ENCODE measurements at regions of chr17 and their contacts with region 1.

Region 1: DNA sequence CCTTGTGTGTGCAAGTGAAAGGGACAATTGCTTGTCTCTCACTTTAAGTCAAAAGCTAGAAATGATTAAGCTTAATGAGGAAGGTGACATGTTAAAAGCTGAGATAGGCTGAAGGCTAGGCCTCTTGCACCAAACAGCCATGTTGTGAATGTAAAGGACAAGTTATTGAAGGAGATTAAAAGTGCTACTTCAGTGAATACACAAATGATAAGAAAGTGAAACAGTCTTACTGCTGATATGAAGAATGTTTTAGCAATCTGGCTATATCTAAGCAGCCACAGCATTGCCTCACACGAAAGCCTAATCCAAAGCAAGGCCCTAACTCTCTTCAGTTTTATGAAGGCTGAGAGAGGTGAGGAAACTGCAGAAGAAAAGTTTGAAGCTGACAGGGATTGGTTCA is 71.0 kb downstream of the CDRT15 start:
- DNase-seq: no peak
- ATAC-seq: no peak
- H3K4me3 ChIP-seq: no peak overlapping the region
- H3K4me3 Mint-ChIP-seq: no peak overlapping the region
- H3K27ac ChIP-seq: no peak overlapping the region
- H3K27ac Mint-ChIP-seq: peak overlapping the region in 4 of 9 donors; percentile 6 to 47 (median 28)
- H3K4me1 ChIP-seq: no peaks in the 10 kb centered on the region
- H3K4me1 Mint-ChIP-seq: peaks cover 2 to 23% (median 15%) of the 10 kb centered on the region in 7 donors
- H3K27me3 ChIP-seq: no peaks in the 10 kb centered on the region
- H3K27me3 Mint-ChIP-seq: no peaks in the 10 kb centered on the region

Region 2: DNA sequence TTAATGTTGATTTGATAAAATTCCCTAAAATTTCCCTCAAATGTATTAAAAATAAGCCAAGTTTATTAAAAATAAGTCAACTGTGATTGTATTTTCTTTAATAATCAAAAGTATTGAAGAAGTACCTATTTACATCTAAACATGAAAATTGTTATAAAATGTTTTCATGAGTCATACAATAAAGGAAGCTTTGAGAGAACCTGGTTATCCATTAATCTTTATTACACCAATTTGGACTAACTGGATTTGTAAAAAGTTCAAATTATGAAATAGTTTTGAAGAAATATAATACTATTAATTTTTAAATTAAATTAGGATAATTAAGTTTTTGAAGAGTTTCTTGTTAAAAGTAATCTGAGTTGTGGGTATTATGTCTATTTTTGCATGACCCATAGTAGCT is 32.5 kb before region 1 on chr17:
- CTCF ChIA-PET with region 1: no interaction called
- POLR2A ChIA-PET with region 1: no interaction called
- intact Hi-C with region 1: loop called in 1 of 2 experiments (anchors 5 kb)
- DNase-seq: no peak
- ATAC-seq: no peak
- H3K4me3 ChIP-seq: no peak overlapping the region
- H3K4me3 Mint-ChIP-seq: no peak overlapping the region
- H3K27ac ChIP-seq: no peak overlapping the region
- H3K27ac Mint-ChIP-seq: no peak overlapping the region
- H3K4me1 ChIP-seq: no peaks in the 10 kb centered on the region
- H3K4me1 Mint-ChIP-seq: peaks cover 8 to 30% (median 22%) of the 10 kb centered on the region in 7 donors
- H3K27me3 ChIP-seq: no peaks in the 10 kb centered on the region
- H3K27me3 Mint-ChIP-seq: no peaks in the 10 kb centered on the region